K562 (cell line): ENCODE measurements at regions of chr6 and their contacts with region 1.

Region 1: DNA sequence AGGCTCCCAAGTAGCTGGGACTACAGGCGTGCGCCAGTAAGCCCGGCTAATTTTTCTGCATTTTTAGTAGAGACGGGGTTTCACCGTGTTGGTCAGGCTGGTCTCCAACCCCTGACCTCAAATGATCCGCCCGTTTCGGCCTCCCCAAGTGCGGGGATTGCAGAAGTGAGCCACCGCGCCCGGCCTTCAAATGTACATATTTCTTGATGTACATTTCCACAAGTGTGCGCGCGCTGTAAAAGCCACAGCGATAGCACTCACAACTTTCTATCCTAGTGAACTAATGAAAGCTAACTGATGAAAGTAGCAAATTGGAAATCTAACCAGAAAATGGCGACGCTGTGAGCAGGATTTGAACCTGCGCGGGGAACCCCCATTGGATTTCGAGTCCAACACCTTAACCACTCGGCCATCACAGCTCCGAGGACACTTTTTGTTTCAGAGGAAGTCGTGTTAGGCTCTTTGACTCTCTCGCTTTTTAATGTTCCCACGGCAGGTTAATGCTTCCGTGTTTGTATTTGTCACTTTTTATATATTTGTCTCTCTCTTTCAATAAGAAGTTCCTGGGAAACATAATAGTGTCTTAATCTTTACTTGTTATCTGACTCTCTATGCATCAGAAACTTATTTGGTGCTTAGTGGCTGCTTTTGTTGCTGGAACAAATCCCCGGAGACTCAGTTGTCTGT is 199.4 kb upstream of the ZNF184 start:
- DNase-seq: peak; percentile 59 to 96 (median 70)
- ATAC-seq: peak; percentile 72
- H3K4me3 ChIP-seq: peak overlapping the region; percentile 53
- H3K27ac ChIP-seq: peak overlapping the region; percentile 82
- H3K4me1 ChIP-seq: peaks cover 7% of the 10 kb centered on the region in 2 experiments; a peak in 4 of 5 replicates
- H3K27me3 ChIP-seq: no peaks in the 10 kb centered on the region
- CTCF ChIP-seq: no peak
- EP300 ChIP-seq: peak; percentile 70
- POLR2A ChIP-seq: no peak
- RAD21 ChIP-seq: peak in 1 of 2 experiments; percentile 31; a peak in 2 of 4 replicates

Region 2: DNA sequence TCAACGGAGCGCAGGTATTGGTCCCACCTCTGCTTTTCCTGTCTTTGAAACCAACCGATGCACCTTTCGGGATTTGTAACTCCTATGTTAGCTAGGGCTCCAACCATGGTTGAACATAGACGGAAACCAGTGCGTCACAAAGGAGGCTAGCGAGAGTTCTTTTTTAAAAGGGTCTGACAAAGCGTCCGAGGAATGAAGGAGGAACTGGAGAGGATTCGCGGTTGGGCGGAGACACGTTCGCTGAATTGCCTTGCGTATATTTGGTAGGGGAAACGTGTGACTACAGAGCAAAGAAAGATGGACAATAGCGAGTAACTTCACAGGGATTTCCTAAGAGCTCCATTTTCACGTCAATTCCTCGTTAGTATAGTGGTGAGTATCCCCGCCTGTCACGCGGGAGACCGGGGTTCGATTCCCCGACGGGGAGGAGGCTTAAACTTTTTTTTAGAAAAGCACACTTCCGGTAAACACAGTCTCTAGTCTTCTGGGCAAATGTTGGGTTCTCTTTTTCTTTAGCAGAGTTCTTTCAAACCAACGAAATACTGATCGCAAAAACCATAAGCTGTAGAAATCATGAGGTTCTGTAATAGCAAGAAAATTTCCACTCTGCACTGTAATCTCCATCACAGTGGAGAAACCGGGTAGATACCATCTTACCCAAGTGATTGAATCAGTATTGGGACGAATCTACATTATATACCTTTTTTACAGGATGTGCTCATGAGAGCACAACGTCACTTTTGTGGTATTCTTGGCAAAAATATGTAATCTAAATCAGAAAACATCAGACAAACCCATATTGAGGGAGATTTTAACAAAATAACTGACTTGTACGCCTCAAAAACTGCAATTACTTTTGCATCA is 192.7 kb before region 1 on chr6:
- CTCF ChIA-PET with region 1: no interaction called
- POLR2A ChIA-PET with region 1: no interaction called
- in situ Hi-C with region 1: no loop called
- intact Hi-C with region 1: loop called (anchors 1 kb)
- DNase-seq: peak; percentile 57 to 89 (median 66)
- ATAC-seq: peak; percentile 76
- H3K4me3 ChIP-seq: peak overlapping the region; percentile 64
- H3K27ac ChIP-seq: peak overlapping the region; percentile 85
- H3K4me1 ChIP-seq: peaks cover 4 to 8% of the 10 kb centered on the region in 2 experiments; a peak in 2 of 5 replicates
- H3K27me3 ChIP-seq: no peaks in the 10 kb centered on the region
- CTCF ChIP-seq: 0 out of 6 replicates have a peak, but pooled peaks of 1 of the 3 experiments have one; percentile 5
- EP300 ChIP-seq: peak; percentile 34
- POLR2A ChIP-seq: peak; percentile 54; the same call in 1 of the 2 replicates
- RAD21 ChIP-seq: no peak; a peak in 2 of 4 replicates

Region 3: GRCh38 chr6:27617700-27618689 is 54.3 kb before region 1 on chr6:
- CTCF ChIA-PET with region 1: no interaction called
- POLR2A ChIA-PET with region 1: interaction called, 5 read pairs
- in situ Hi-C with region 1: no loop called
- intact Hi-C with region 1: loop called (anchors 1 kb)
- DNase-seq: peak; percentile 62 to 81 (median 73)
- ATAC-seq: peak; percentile 90
- H3K4me3 ChIP-seq: peak overlapping the region; percentile 53
- H3K27ac ChIP-seq: peak overlapping the region; percentile 33
- H3K4me1 ChIP-seq: peaks cover 5 to 20% of the 10 kb centered on the region in 2 experiments; a peak in 4 of 5 replicates
- H3K27me3 ChIP-seq: no peaks in the 10 kb centered on the region
- CTCF ChIP-seq: peak; percentile 15 to 53 (median 39); a peak in 3 of 6 replicates
- EP300 ChIP-seq: peak; percentile 68
- POLR2A ChIP-seq: no peak
- RAD21 ChIP-seq: peak; percentile 19 to 55

Region 4: GRCh38 chr6:27650620-27651370 is 21.5 kb before region 1 on chr6:
- CTCF ChIA-PET with region 1: no interaction called
- POLR2A ChIA-PET with region 1: interaction called, 3 read pairs
- in situ Hi-C with region 1: no loop called
- intact Hi-C with region 1: loop called (anchors 1 kb)
- DNase-seq: peak; percentile 76 to 93 (median 81)
- ATAC-seq: peak; percentile 92
- H3K4me3 ChIP-seq: peak overlapping the region; percentile 44
- H3K27ac ChIP-seq: no peak overlapping the region; the same call in 2 of the 3 replicates
- H3K4me1 ChIP-seq: peaks cover 10 to 15% of the 10 kb centered on the region in 2 experiments; a peak in 4 of 5 replicates
- H3K27me3 ChIP-seq: no peaks in the 10 kb centered on the region
- CTCF ChIP-seq: peak; percentile 30 to 64 (median 51); a peak in 5 of 6 replicates
- EP300 ChIP-seq: peak; percentile 75
- POLR2A ChIP-seq: no peak
- RAD21 ChIP-seq: peak; percentile 11 to 34; a peak in 1 of 4 replicates